PC-9 (cell line): ENCODE measurements at regions of chr16 and their contacts with region 1.

Region 1: DNA sequence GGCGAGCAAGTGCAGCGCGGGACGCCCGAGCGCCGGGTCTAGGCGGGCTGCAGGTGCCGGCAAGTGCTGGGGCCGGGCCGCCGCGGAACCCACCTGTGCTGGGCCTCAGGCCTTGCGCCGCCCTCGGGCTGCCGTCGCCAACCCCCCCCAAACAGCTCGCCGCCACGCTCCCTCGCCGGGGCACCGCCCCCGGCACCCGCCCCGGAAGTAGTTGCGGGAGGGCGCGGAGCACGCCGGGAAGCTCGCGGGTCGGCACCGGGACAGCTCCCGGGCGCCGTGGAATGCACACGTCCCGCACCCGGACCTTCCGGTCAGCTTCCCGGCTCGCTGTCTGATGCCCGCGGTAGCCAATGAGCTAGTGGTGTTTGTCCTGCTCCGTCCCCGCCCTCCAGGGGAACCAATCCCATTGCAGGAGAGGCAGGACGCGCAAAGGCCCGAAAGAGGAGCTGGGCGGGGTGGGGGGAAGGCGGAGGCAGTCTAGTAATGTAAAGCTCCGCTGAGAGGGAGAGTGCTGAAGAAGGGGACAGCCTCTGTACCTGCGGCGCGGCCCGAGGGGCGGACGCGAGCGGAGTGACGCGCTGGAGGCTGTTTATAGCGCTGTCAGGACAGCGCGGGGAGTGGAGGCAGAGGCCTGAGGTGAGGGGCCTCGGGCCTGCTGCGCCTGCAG is at the starts of genes ANKS3 and DNAAF8:
- DNase-seq: peak; percentile 93 to 97
- H3K4me3 ChIP-seq: peak within 1 kb of the TSS; percentile 83
- H3K27ac ChIP-seq: peak within 1 kb of the TSS; percentile 52
- H3K4me1 ChIP-seq: peaks cover 12% of the 10 kb centered on the region
- H3K27me3 ChIP-seq: no peaks in the 10 kb centered on the region
- CTCF ChIP-seq: no peak
- total RNA-seq, gene ANKS3: 32.8 and 35.0 TPM in 2 replicates
- total RNA-seq, gene DNAAF8: 1.8 and 2.4 TPM in 2 replicates

Region 2: GRCh38 chr16:2919511-2920255 is 1814.5 kb before region 1 on chr16:
- CTCF ChIA-PET with region 1: interaction called, 10 read pairs
- POLR2A ChIA-PET with region 1: no interaction called
- intact Hi-C with region 1: no loop called
- DNase-seq: peak; percentile 38 to 57
- H3K4me3 ChIP-seq: no peak overlapping the region
- H3K27ac ChIP-seq: no peak overlapping the region
- H3K4me1 ChIP-seq: peaks cover 18% of the 10 kb centered on the region
- H3K27me3 ChIP-seq: no peaks in the 10 kb centered on the region
- CTCF ChIP-seq: peak; percentile 96

Region 3: GRCh38 chr16:4802659-4803287 is 68.6 kb after region 1 on chr16:
- CTCF ChIA-PET with region 1: interaction called, 4 read pairs
- POLR2A ChIA-PET with region 1: interaction called, 12 read pairs
- intact Hi-C with region 1: loop called (anchors 1 kb)
- DNase-seq: peak; percentile 82 to 96
- H3K4me3 ChIP-seq: peak overlapping the region; percentile 81
- H3K27ac ChIP-seq: peak overlapping the region; percentile 55
- H3K4me1 ChIP-seq: peaks cover 14% of the 10 kb centered on the region
- H3K27me3 ChIP-seq: no peaks in the 10 kb centered on the region
- CTCF ChIP-seq: 0 out of 2 replicates have a peak, but pooled peaks have one; percentile 25